Activated T-helper 1 cell treated with anti-CD3 and anti-CD28 coated beads, Interleukin-12 subunit alpha, Interleukin-12 subunit beta, Interleukin-2, Interleukin-4 antibody, amounts not matched to agents 30 ng/mL and 10 ng/mL and 1 ng/mL, durations not matched to agents 14 hours and 24 hours and 36 hours (primary cell): ENCODE measurements at regions of chrX and their contacts with region 1.

Region 1: DNA sequence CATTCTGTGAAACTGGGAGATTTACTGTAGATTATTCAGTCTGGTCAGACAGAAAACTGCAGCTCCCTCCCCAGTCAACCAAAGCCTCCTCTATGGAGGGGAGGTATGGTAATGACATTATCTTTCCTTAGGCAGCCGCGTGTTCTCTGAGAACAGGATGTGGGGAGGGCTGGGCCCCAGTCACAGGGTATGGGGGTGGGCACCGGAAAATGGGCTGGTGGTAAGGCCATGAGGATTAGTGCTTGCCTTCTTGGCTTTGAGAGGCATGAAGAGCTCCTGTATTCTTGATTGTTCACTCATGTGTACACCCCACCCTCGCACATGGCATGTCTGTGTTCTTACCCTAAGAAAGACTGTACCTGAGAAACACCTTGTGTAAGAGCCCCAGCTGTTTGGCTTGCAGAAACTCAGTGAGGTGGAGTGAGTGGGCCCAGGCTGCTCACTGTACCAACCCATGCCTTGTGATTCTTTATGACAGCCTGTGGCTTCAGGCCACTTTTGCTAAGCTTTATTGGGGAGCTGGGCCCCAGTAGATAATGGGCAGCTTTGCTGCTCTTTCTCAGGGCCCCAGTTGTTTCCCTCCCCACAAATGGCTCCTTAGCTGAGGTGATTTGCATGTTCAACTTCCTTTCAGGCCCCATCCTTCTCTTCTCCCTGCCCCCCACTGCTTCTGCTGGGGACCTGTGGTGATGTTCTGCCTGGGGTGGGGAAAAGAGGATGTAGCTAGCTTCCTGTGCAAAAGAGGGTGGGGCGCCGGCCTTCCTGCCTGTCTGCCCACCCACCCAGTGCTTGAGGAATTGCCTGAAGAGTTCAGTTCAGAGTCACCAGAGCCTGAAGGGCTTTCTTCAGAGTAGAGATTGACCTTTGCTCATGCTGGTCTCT is 30.7 kb downstream of the MSN start:
- DNase-seq: peak; percentile 65
- H3K4me3 Mint-ChIP-seq: peak overlapping the region; percentile 77
- H3K27ac Mint-ChIP-seq: peak overlapping the region; percentile 98
- H3K4me1 Mint-ChIP-seq: peaks cover 90% of the 10 kb centered on the region
- H3K27me3 Mint-ChIP-seq: no peaks in the 10 kb centered on the region

Region 2: GRCh38 chrX:65502618-65503017 is 195.5 kb before region 1 on chrX:
- intact Hi-C with region 1: no loop called
- DNase-seq: no peak
- H3K4me3 Mint-ChIP-seq: no peak overlapping the region
- H3K27ac Mint-ChIP-seq: no peak overlapping the region
- H3K4me1 Mint-ChIP-seq: no peaks in the 10 kb centered on the region
- H3K27me3 Mint-ChIP-seq: no peaks in the 10 kb centered on the region

Region 3: GRCh38 chrX:65601530-65602220 is 96.5 kb before region 1 on chrX:
- intact Hi-C with region 1: no loop called
- DNase-seq: peak; percentile 46
- H3K4me3 Mint-ChIP-seq: peak overlapping the region; percentile 39
- H3K27ac Mint-ChIP-seq: peak overlapping the region; percentile 94
- H3K4me1 Mint-ChIP-seq: peaks cover 59% of the 10 kb centered on the region
- H3K27me3 Mint-ChIP-seq: no peaks in the 10 kb centered on the region

Region 4: DNA sequence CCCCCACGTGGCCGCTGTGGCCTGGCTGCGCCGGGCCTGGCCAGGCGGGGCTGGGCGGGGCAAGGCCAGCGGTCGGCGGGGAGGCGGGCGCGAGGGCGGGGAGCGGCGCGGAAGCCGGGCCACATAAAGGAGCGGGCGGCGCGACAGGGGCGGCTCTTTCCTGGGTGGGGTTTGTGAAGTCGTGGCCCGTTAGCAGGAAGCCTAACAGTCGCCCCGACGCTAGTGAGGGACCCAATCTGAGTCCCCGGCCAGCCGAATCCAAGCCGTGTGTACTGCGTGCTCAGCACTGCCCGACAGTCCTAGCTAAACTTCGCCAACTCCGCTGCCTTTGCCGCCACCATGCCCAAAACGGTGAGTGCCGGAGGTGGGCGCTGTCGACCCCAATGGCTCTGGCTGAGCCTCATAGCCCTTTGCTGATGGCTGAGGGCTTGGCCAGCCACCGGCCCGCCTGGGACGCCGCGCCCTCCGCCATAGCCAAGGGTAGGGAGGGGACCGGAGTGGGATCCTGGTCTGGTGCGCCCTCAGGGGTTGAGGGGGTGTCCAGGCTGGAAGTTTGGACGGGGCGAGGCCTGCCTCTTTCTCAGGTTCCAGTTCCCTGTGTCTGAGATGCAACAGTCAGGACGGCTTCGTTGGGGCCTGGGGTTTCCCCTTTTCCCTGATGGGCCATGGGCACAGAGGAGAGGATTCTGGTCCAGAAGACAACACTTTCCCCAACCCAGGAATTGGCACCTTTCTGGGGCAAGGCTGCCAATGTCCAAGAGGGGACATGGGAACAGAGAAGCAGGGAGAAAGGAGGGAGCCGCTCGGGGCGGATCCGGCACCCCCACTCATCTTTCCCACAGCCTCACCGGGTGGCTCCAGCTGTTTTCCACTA is 30.4 kb before region 1 on chrX and contains the start of gene MSN:
- intact Hi-C with region 1: loop called (anchors 1 kb)
- DNase-seq: peak; percentile 74
- H3K4me3 Mint-ChIP-seq: peak within 1 kb of the TSS; percentile 98
- H3K27ac Mint-ChIP-seq: peak within 1 kb of the TSS; percentile 97
- H3K4me1 Mint-ChIP-seq: peaks cover 43% of the 10 kb centered on the region
- H3K27me3 Mint-ChIP-seq: no peaks in the 10 kb centered on the region
- total RNA-seq, gene MSN: 479 and 484 TPM in 2 replicates

Region 5: GRCh38 chrX:65677954-65678469 is 20.1 kb before region 1 on chrX:
- intact Hi-C with region 1: loop called (anchors 1 kb)
- DNase-seq: no peak
- H3K4me3 Mint-ChIP-seq: peak overlapping the region; percentile 45
- H3K27ac Mint-ChIP-seq: peak overlapping the region; percentile 78
- H3K4me1 Mint-ChIP-seq: peaks cover 89% of the 10 kb centered on the region
- H3K27me3 Mint-ChIP-seq: no peaks in the 10 kb centered on the region

Region 6: GRCh38 chrX:65686236-65686635 is 11.9 kb before region 1 on chrX:
- intact Hi-C with region 1: loop called (anchors 1 kb)
- DNase-seq: no peak
- H3K4me3 Mint-ChIP-seq: no peak overlapping the region
- H3K27ac Mint-ChIP-seq: peak overlapping the region; percentile 91
- H3K4me1 Mint-ChIP-seq: peaks cover 80% of the 10 kb centered on the region
- H3K27me3 Mint-ChIP-seq: no peaks in the 10 kb centered on the region

Region 7: GRCh38 chrX:65772842-65773241 is 74.7 kb after region 1 on chrX:
- intact Hi-C with region 1: no loop called
- DNase-seq: no peak
- H3K4me3 Mint-ChIP-seq: no peak overlapping the region
- H3K27ac Mint-ChIP-seq: no peak overlapping the region
- H3K4me1 Mint-ChIP-seq: peaks cover 4% of the 10 kb centered on the region
- H3K27me3 Mint-ChIP-seq: no peaks in the 10 kb centered on the region